Left ventricle myocardium superior (tissue), 1 donor: ENCODE measurements at regions of chr18 and their contacts with region 1.

Region 1: GRCh38 chr18:36309436-36310391 is 12.2 kb downstream of the FHOD3 start:
- DNase-seq: peak; percentile 39
- ATAC-seq: peak; percentile 46

Region 2: GRCh38 chr18:36179562-36180355 is 130.0 kb before region 1 on chr18:
- intact Hi-C with region 1: no loop called
- DNase-seq: peak; percentile 84
- ATAC-seq: peak; percentile 70

Region 3: DNA sequence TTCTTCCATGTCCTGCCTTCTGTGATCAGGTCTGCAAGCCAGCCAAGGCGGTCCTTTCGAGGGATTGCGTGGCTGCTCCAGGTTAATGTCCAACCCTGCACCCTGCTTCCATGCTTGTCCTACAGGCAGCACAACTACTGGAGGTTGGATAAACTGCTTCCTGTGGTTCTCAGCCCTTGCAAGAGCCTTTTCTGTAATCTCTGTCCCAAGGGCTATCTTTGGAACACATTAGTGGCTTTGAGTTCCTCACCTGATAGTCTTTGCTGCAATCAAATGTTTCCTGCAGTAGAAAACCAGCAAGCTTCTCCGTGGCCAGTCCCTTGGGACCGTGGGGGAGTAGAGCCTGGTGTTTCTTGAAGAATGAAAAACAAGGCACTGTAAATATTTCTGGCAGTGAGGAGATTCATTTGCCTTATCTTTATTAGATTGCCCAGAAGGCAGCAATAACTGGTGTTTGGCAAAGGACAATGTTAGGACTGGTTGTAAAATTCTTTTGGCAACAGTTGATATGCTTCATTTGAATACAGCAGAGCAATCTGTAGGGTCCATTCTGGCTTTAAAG is 202.2 kb after region 1 on chr18:
- intact Hi-C with region 1: no loop called
- DNase-seq: no peak
- ATAC-seq: peak; percentile 72

Region 4: GRCh38 chr18:36567800-36568199 is 258.1 kb after region 1 on chr18:
- intact Hi-C with region 1: loop called (anchors 10 kb)
- DNase-seq: no peak
- ATAC-seq: peak; percentile 36